A549 (cell line): ENCODE measurements at regions of chr2 and their contacts with region 1.

Region 1: GRCh38 chr2:25165992-25166875 is 2.1 kb downstream of the POMC start:
- DNase-seq: peak; percentile 26 to 61
- ATAC-seq: peak; percentile 66 to 86
- H3K4me3 ChIP-seq: no peak overlapping the region
- H3K27ac ChIP-seq: no peak overlapping the region
- H3K4me1 ChIP-seq: no peaks in the 10 kb centered on the region
- CTCF ChIP-seq: peak; percentile 71
- EP300 ChIP-seq: no peak
- POLR2A ChIP-seq: no peak
- RAD21 ChIP-seq: peak; percentile 76 to 81

Region 2: DNA sequence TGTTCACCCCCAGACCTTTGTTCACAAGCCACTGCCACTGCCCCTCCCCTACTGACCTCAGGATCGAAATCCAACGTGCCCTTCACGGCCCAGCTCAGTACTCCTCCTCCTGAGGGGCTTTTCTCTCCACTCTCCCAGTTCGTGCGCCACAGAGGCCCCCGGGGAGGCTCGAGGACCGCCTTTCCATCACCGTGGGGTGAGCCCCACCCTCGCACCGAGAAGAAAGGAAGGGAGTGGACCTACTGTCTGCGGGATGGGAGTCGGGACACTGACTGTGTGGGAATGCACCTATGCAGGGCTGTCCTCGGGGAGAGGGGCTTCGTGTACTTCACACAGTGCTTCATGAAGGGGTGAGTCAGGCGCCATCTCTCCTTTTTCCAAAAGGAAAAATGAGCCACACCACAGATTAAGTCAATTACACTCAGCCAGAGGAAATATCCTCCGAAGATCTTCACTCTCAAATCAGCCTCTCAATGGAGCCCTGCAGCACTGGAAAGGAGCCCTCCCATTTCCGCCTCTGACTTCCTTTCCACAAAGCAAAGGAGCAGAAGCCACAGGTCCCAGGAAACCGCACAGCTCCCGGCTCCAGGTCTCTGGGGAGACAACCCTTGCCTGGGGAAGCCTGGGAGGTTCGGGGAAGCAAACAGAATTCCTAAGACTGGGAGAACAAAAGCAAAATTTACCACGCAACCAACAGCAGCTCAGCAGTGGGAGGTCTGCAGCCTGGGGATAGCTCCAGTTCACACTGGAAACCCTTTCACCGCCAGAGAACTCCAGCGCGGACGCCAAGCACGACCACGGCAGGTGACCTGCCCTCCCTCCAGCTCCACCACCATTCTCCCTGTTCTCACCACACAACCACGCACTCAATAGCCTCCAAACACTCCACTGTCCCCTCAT is 267.9 kb before region 1 on chr2:
- CTCF ChIA-PET with region 1: no interaction called
- POLR2A ChIA-PET with region 1: no interaction called
- DNase-seq: no peak
- ATAC-seq: no peak
- H3K4me3 ChIP-seq: no peak overlapping the region
- H3K27ac ChIP-seq: no peak overlapping the region
- H3K4me1 ChIP-seq: no peaks in the 10 kb centered on the region
- CTCF ChIP-seq: no peak
- EP300 ChIP-seq: no peak
- POLR2A ChIP-seq: no peak
- RAD21 ChIP-seq: no peak

Region 3: GRCh38 chr2:25177211-25177611 is 11.0 kb after region 1 on chr2:
- CTCF ChIA-PET with region 1: interaction called, 11 read pairs
- POLR2A ChIA-PET with region 1: interaction called, 5 read pairs
- DNase-seq: no peak
- ATAC-seq: no peak
- H3K4me3 ChIP-seq: no peak overlapping the region
- H3K27ac ChIP-seq: no peak overlapping the region
- H3K4me1 ChIP-seq: no peaks in the 10 kb centered on the region
- CTCF ChIP-seq: no peak
- EP300 ChIP-seq: no peak
- POLR2A ChIP-seq: no peak
- RAD21 ChIP-seq: no peak

Region 4: GRCh38 chr2:25204190-25204838 is 38.1 kb after region 1 on chr2:
- CTCF ChIA-PET with region 1: interaction called, 12 read pairs
- POLR2A ChIA-PET with region 1: no interaction called
- DNase-seq: no peak
- ATAC-seq: no peak
- H3K4me3 ChIP-seq: no peak overlapping the region
- H3K27ac ChIP-seq: no peak overlapping the region
- H3K4me1 ChIP-seq: no peaks in the 10 kb centered on the region
- CTCF ChIP-seq: no peak
- EP300 ChIP-seq: no peak
- POLR2A ChIP-seq: no peak
- RAD21 ChIP-seq: no peak